Transverse colon (tissue), 4 donors: ENCODE measurements at regions of chr15 and their contacts with region 1.

Region 1: GRCh38 chr15:59104912-59105732 is at the start of gene CCNB2:
- DNase-seq: peak; percentile 86
- H3K4me3 ChIP-seq: peak within 1 kb of the TSS; percentile 48 to 74 (median 64)
- H3K27ac ChIP-seq: peak within 1 kb of the TSS; percentile 36 to 75 (median 65)
- H3K4me1 ChIP-seq: peaks cover 0 to 20% (median 0%) of the 10 kb centered on the region in 4 donors
- H3K27me3 ChIP-seq: no peaks in the 10 kb centered on the region
- CTCF ChIP-seq: no peak
- EP300 ChIP-seq: no peak
- POLR2A ChIP-seq: no peak
- total RNA-seq, gene CCNB2: 1.9 to 132 (median 6.4) TPM

Region 2: GRCh38 chr15:58987489-58988005 is 117.6 kb before region 1 on chr15 and contains the start of gene RNF111:
- in situ Hi-C with region 1: loop called in 1 of 4 experiments (anchors 10 kb)
- intact Hi-C with region 1: no loop called
- DNase-seq: peak; percentile 93
- H3K4me3 ChIP-seq: peak within 1 kb of the TSS; percentile 82 to 97 (median 83)
- H3K27ac ChIP-seq: peak within 1 kb of the TSS; percentile 93 to 96 (median 94)
- H3K4me1 ChIP-seq: peaks cover 3 to 32% (median 14%) of the 10 kb centered on the region in 4 donors
- H3K27me3 ChIP-seq: no peaks in the 10 kb centered on the region
- CTCF ChIP-seq: no peak
- EP300 ChIP-seq: no peak
- POLR2A ChIP-seq: peak; percentile 90
- total RNA-seq, gene RNF111: 16.1 to 93.1 (median 25.3) TPM